Activated CD4-positive, alpha-beta T cell treated with anti-CD3 and anti-CD28 coated beads for 36 hours (primary cell): ENCODE measurements at regions of chr3 and their contacts with region 1.

Region 1: GRCh38 chr3:4834403-4834866 is 144.8 kb upstream of the BHLHE40 start:
- DNase-seq: peak; percentile 84
- ATAC-seq: peak; percentile 31
- H3K4me3 Mint-ChIP-seq: peak overlapping the region; percentile 26
- H3K27ac Mint-ChIP-seq: peak overlapping the region; percentile 90
- H3K4me1 Mint-ChIP-seq: peaks cover 86% of the 10 kb centered on the region
- H3K27me3 Mint-ChIP-seq: no peaks in the 10 kb centered on the region

Region 2: DNA sequence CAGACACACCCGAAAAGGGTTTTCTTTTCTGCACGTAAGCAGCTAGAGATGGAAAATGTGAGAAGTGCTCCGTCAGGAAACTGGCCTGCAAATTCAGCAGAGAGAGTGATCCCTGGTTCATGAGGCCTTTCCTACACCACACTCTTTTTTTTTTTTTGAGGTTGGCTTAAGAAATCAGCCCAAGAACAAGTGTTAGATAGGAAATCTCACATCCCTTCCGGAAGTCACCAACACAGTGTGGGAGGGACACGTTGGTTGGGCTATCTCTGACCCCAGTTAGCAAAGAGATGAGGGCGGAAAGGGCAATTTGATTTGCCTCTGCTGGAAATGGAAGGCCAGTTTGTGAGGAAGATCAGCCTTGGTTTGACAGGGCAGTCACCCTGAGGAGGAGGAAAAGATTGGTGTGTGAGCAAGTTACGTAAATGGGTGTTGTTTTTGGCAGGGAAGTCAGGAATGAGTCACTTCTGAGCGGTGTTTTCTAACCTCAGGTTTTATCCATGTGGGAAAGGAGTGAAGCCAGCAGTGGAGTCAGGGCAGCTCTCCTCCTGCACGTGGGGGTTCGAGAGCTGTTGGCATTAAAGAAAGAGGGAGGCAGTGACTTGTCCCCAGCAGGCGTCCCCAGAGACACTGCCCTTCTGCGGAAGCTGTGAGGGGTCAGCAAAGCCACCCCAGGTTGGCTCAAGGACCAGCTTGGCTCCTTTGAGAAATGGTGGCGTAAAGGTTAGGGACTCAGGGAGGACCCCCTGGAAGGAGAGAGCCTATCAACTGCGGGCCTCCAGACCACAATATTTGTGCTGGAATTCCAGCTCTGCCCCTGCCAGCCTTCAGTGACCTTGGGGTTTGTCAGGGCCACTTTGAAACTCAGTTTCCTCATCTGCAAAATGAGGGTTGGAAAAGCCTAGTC is 92.8 kb before region 1 on chr3:
- CTCF ChIA-PET with region 1: no interaction called
- POLR2A ChIA-PET with region 1: no interaction called
- intact Hi-C with region 1: loop called in 1 of 2 experiments (anchors 1 kb)
- DNase-seq: peak; percentile 44
- ATAC-seq: peak; percentile 39
- H3K4me3 Mint-ChIP-seq: no peak overlapping the region
- H3K27ac Mint-ChIP-seq: peak overlapping the region; percentile 89
- H3K4me1 Mint-ChIP-seq: peaks cover 50% of the 10 kb centered on the region
- H3K27me3 Mint-ChIP-seq: no peaks in the 10 kb centered on the region

Region 3: DNA sequence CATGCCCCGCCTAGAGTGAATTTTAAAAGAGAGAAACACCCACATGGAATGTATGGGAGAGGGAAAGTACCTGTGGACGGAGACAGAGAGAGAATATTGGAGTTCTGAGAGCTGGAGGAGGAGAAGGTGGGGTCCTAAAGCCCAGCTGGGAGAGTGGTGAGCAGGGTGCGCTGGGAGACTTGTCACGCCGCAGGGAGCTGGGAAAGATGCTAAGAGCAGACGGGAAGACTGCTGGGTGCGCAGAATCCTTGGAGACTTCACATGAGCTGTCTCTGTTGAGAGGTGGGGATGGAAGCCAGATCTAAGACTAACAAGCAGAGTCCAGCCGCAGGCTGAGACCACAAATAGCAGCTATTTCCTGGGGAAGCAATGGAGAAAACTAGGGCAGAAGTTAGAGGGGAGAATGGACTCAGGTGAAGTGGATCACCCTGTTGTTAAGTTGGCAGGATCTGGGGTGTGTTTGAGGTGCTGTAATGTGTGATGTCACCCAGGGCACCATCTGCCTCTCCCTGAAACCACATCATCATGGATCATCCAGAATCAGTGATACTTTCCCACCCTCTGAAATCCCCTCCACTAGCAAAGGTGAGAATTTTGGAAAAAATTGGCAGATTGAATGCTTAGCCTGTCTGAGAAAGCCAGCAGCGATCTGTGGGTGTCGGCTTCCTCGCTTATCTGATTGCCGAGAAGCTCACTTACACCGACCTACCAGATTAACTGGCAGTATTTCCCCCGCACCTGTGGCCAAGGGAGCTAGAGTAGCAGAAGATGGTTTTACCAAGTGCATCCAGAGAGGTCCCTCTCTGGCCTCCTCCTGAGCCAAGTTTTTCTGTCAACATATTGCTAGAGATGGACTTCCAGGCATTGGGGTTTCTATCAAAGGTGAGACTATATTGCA is 30.0 kb before region 1 on chr3:
- CTCF ChIA-PET with region 1: interaction called, 6 read pairs
- POLR2A ChIA-PET with region 1: interaction called, 3 read pairs
- intact Hi-C with region 1: loop called (anchors 1 kb)
- DNase-seq: peak; percentile 48
- ATAC-seq: no peak
- H3K4me3 Mint-ChIP-seq: peak overlapping the region; percentile 4
- H3K27ac Mint-ChIP-seq: peak overlapping the region; percentile 73
- H3K4me1 Mint-ChIP-seq: peaks cover 39% of the 10 kb centered on the region
- H3K27me3 Mint-ChIP-seq: no peaks in the 10 kb centered on the region

Region 4: GRCh38 chr3:4850928-4851265 is 16.5 kb after region 1 on chr3:
- CTCF ChIA-PET with region 1: interaction called, 56 read pairs
- POLR2A ChIA-PET with region 1: interaction called, 11 read pairs
- intact Hi-C with region 1: loop called (anchors 1 kb)
- DNase-seq: peak; percentile 56
- ATAC-seq: peak; percentile 72
- H3K4me3 Mint-ChIP-seq: peak overlapping the region; percentile 39
- H3K27ac Mint-ChIP-seq: peak overlapping the region; percentile 98
- H3K4me1 Mint-ChIP-seq: peaks cover 84% of the 10 kb centered on the region
- H3K27me3 Mint-ChIP-seq: no peaks in the 10 kb centered on the region

Region 5: DNA sequence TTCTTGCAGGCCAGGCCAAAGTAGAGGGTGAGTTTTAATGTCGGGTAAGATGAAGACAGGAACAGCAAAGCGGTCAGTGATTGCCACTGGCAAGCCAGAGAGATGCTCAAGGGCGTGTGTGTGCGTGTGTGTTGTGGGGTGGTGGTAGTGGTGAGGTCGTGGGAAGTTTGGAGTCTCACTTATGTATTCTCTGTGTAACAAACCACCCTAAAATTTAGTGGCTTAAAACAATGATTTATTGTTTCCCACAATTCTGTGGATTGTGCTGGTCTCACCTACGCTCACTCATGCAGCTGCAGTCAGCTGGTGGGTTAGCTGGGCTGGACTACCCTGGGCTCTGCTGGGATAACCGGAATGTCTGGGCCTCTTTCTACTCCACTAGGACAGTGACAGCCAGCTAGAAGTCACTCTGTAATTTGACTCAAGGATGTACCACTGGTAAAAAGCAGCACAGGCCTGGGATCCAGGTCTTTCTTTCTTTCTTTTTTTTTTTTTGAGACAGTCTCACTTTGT is 93.9 kb after region 1 on chr3:
- CTCF ChIA-PET with region 1: no interaction called
- POLR2A ChIA-PET with region 1: no interaction called
- intact Hi-C with region 1: no loop called
- DNase-seq: peak; percentile 31
- ATAC-seq: peak; percentile 14
- H3K4me3 Mint-ChIP-seq: no peak overlapping the region
- H3K27ac Mint-ChIP-seq: peak overlapping the region; percentile 48
- H3K4me1 Mint-ChIP-seq: peaks cover 24% of the 10 kb centered on the region
- H3K27me3 Mint-ChIP-seq: no peaks in the 10 kb centered on the region

Region 6: GRCh38 chr3:5122030-5122740 is 287.8 kb after region 1 on chr3 and contains the start of gene ARL8B:
- CTCF ChIA-PET with region 1: interaction called, 3 read pairs
- POLR2A ChIA-PET with region 1: interaction called, 3 read pairs
- intact Hi-C with region 1: loop called (anchors 1 to 5 kb)
- DNase-seq: peak; percentile 96
- ATAC-seq: peak; percentile 84
- H3K4me3 Mint-ChIP-seq: peak within 1 kb of the TSS; percentile 83
- H3K27ac Mint-ChIP-seq: peak within 1 kb of the TSS; percentile 94
- H3K4me1 Mint-ChIP-seq: peaks cover 42% of the 10 kb centered on the region
- H3K27me3 Mint-ChIP-seq: no peaks in the 10 kb centered on the region
- total RNA-seq, gene ARL8B: 44.7 to 45.1 TPM

Region 7: GRCh38 chr3:5330152-5330810 is 495.8 kb after region 1 on chr3:
- CTCF ChIA-PET with region 1: no interaction called
- POLR2A ChIA-PET with region 1: no interaction called
- intact Hi-C with region 1: loop called in 1 of 2 experiments (anchors 10 kb)
- DNase-seq: peak; percentile 71
- ATAC-seq: peak; percentile 88
- H3K4me3 Mint-ChIP-seq: peak overlapping the region; percentile 22
- H3K27ac Mint-ChIP-seq: peak overlapping the region; percentile 77
- H3K4me1 Mint-ChIP-seq: peaks cover 46% of the 10 kb centered on the region
- H3K27me3 Mint-ChIP-seq: peaks cover 5% of the 10 kb centered on the region